ENCODE measurements at regions of chr2 and their contacts with region 1.

Region 1: GRCh38 chr2:138447889-138448570 is 53.5 kb upstream of the SPOPL start:
- DNase-seq: no peak
- H3K4me3 ChIP-seq: no peak overlapping the region
- H3K27ac ChIP-seq: no peak overlapping the region
- H3K4me1 ChIP-seq: no peaks in the 10 kb centered on the region
- H3K27me3 ChIP-seq: no peaks in the 10 kb centered on the region
- CTCF ChIP-seq: no peak

Region 2: GRCh38 chr2:138403386-138403927 is 44.6 kb before region 1 on chr2:
- CTCF ChIA-PET with region 1: interaction called, 10 read pairs
- POLR2A ChIA-PET with region 1: no interaction called
- intact Hi-C with region 1: no loop called
- DNase-seq: no peak
- H3K4me3 ChIP-seq: no peak overlapping the region
- H3K27ac ChIP-seq: no peak overlapping the region
- H3K4me1 ChIP-seq: no peaks in the 10 kb centered on the region
- H3K27me3 ChIP-seq: no peaks in the 10 kb centered on the region
- CTCF ChIP-seq: no peak

Measured in A673 (cell line).